ENCODE measurements at regions of chr1 and their contacts with region 1.

Region 1: GRCh38 chr1:22861764-22862440 is 110.8 kb downstream of the LACTBL1 start:
- DNase-seq: peak; percentile 86
- H3K4me3 ChIP-seq: no peak overlapping the region
- H3K27ac ChIP-seq: peak overlapping the region; percentile 45
- H3K4me1 ChIP-seq: peaks cover 14% of the 10 kb centered on the region
- H3K27me3 ChIP-seq: no peaks in the 10 kb centered on the region
- CTCF ChIP-seq: peak; percentile 89 to 91

Region 2: GRCh38 chr1:22709891-22710700 is 151.8 kb before region 1 on chr1:
- CTCF ChIA-PET with region 1: interaction called, 14 read pairs
- dilution Hi-C with region 1: no loop called
- in situ Hi-C with region 1: no loop called
- intact Hi-C with region 1: no loop called
- DNase-seq: peak; percentile 19
- H3K4me3 ChIP-seq: peak overlapping the region; percentile 23 to 43 (median 43)
- H3K27ac ChIP-seq: no peak overlapping the region
- H3K4me1 ChIP-seq: peaks cover 2% of the 10 kb centered on the region
- H3K27me3 ChIP-seq: peaks cover 4% of the 10 kb centered on the region
- CTCF ChIP-seq: no peak

Region 3: DNA sequence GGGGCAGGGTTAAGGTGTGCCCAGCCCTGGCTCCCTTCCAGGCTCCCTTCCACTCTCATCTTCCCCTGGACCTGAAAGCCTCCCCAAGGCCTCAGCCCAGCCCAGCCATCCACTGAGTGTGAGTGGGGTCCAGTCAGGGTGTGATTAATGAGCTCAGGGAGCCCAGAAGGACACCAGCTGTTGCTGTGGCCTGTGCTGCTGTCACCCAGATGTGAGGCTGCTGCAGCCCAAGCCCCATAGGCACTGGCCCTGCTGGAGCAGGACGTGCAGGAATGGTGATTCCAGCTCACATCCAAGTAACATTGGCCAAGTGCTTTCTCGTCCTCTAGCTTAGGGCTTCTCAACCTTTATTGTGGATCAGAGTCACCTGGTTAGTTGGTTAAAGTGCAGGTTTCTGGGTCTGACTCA is 73.6 kb before region 1 on chr1:
- CTCF ChIA-PET with region 1: no interaction called
- dilution Hi-C with region 1: no loop called
- in situ Hi-C with region 1: no loop called
- intact Hi-C with region 1: loop called (anchors 2 kb)
- DNase-seq: peak; percentile 68
- H3K4me3 ChIP-seq: no peak overlapping the region
- H3K27ac ChIP-seq: no peak overlapping the region
- H3K4me1 ChIP-seq: peaks cover 30% of the 10 kb centered on the region
- H3K27me3 ChIP-seq: no peaks in the 10 kb centered on the region
- CTCF ChIP-seq: no peak

Region 4: DNA sequence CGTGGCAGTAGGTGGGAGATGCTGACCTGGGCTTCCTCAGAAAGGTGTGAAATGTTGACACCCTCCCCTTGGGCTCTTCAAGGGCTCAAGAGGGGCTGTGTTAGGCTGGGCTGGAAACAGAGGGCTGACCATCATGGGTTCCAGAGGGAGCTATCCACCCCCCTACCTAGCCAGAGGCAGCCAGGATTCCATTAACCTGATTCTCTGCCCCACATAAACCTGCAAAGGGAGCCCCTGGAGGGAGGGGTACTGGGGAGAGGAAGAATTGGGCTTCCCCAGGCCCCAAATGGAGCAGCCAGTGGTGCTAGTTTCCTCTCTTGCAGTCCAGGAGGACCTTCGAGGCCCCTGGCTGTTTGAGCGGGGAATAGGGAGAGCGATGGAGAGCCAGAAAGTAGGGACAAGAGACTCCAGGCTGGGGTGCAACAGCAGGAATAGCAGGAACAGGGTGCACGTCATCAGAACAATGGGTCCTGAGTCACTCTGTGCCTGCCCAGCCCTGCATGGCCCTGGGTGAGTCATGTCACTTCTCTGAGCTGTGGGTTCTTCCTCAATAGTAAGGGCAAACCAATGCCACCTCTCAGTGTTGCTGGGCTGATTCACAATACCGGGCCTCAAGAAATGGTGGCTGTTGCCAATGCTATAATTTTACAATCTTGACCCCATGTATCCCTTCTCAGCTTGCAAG is 30.0 kb before region 1 on chr1:
- CTCF ChIA-PET with region 1: interaction called, 6 read pairs
- dilution Hi-C with region 1: no loop called
- in situ Hi-C with region 1: no loop called
- intact Hi-C with region 1: loop called (anchors 1 kb)
- DNase-seq: peak; percentile 98
- H3K4me3 ChIP-seq: no peak overlapping the region
- H3K27ac ChIP-seq: peak overlapping the region; percentile 81
- H3K4me1 ChIP-seq: peaks cover 63% of the 10 kb centered on the region
- H3K27me3 ChIP-seq: no peaks in the 10 kb centered on the region
- CTCF ChIP-seq: no peak

Region 5: DNA sequence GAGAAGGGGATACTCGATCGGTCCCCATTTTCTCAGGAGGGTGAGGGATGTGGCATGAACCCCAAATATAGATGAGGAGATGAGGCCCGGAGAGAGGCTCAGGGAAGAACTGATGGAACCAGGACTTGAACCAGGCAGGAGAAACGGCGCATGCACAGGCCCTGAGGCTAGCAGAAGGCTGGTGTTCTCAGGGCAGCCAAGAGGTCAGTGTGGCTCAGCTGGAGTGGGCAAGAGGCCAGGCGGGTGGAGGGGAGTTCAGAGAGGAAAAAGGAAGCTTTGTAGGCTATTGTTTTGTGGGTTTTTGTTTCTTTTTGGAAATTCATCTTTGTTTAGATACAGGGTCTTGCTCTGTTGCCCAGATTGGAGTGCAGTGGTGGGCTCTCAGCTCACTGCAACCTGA is 11.2 kb before region 1 on chr1:
- CTCF ChIA-PET with region 1: no interaction called
- dilution Hi-C with region 1: no loop called
- in situ Hi-C with region 1: no loop called
- intact Hi-C with region 1: no loop called
- DNase-seq: no peak
- H3K4me3 ChIP-seq: no peak overlapping the region
- H3K27ac ChIP-seq: no peak overlapping the region
- H3K4me1 ChIP-seq: no peaks in the 10 kb centered on the region
- H3K27me3 ChIP-seq: peaks cover 3% of the 10 kb centered on the region
- CTCF ChIP-seq: no peak

Measured in mammary epithelial cell (primary cell).